ENCODE measurements at regions of chr5 and their contacts with region 1.

Region 1: GRCh38 chr5:123423278-123424149 is at the start of gene CEP120:
- DNase-seq: peak; percentile 100
- H3K4me3 Mint-ChIP-seq: no peak within 1 kb of the TSS
- H3K27ac Mint-ChIP-seq: no peak within 1 kb of the TSS
- H3K4me1 Mint-ChIP-seq: peaks cover 15% of the 10 kb centered on the region
- H3K27me3 Mint-ChIP-seq: no peaks in the 10 kb centered on the region
- CTCF ChIP-seq: peak; percentile 87
- total RNA-seq, gene CEP120: 49.8 and 54.5 TPM in 2 replicates

Region 2: GRCh38 chr5:122602700-122603099 is 820.8 kb before region 1 on chr5:
- CTCF ChIA-PET with region 1: no interaction called
- POLR2A ChIA-PET with region 1: no interaction called
- intact Hi-C with region 1: no loop called
- DNase-seq: no peak
- H3K4me3 Mint-ChIP-seq: no peak overlapping the region
- H3K27ac Mint-ChIP-seq: no peak overlapping the region
- H3K4me1 Mint-ChIP-seq: peaks cover 6% of the 10 kb centered on the region
- H3K27me3 Mint-ChIP-seq: no peaks in the 10 kb centered on the region
- CTCF ChIP-seq: no peak

Region 3: GRCh38 chr5:122766130-122766529 is 657.4 kb before region 1 on chr5:
- CTCF ChIA-PET with region 1: no interaction called
- POLR2A ChIA-PET with region 1: no interaction called
- intact Hi-C with region 1: no loop called
- DNase-seq: no peak
- H3K4me3 Mint-ChIP-seq: no peak overlapping the region
- H3K27ac Mint-ChIP-seq: no peak overlapping the region
- H3K4me1 Mint-ChIP-seq: no peaks in the 10 kb centered on the region
- H3K27me3 Mint-ChIP-seq: no peaks in the 10 kb centered on the region
- CTCF ChIP-seq: no peak

Region 4: DNA sequence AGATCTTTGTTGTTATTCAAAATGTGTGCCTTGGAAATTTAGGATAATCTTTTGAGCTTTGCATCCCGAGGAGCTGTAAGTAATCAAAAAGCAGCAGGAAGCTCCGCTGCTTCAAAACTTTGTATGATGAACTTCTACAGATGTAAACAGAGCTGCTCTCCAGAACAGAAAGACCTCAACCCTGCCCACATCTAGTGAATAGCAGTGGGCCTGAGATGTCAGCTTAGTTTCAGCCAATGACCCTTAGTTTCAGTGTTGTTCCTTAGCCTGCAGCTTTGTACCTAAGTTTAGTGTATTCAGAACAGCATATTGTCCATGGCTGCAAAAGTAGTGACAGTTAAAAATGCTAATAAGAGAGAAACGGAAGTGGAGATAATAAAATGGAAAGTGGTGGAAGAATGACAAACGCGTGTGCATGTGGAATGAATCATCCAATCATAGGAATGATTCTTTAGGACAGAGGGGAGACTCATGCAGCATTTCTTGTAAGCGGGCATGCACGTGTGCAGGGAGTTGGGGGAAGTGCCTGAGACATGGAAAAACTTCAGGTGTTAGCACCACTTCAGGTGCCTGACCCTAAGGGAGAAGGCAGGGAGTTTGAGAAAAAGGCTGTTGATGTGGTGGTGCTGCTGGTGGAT is 553.2 kb before region 1 on chr5:
- CTCF ChIA-PET with region 1: no interaction called
- POLR2A ChIA-PET with region 1: no interaction called
- intact Hi-C with region 1: no loop called
- DNase-seq: no peak
- H3K4me3 Mint-ChIP-seq: no peak overlapping the region
- H3K27ac Mint-ChIP-seq: no peak overlapping the region
- H3K4me1 Mint-ChIP-seq: peaks cover 13% of the 10 kb centered on the region
- H3K27me3 Mint-ChIP-seq: no peaks in the 10 kb centered on the region
- CTCF ChIP-seq: no peak

Region 5: GRCh38 chr5:123441408-123441807 is 17.9 kb after region 1 on chr5:
- CTCF ChIA-PET with region 1: interaction called, 9 read pairs
- POLR2A ChIA-PET with region 1: interaction called, 11 read pairs
- intact Hi-C with region 1: no loop called
- DNase-seq: no peak
- H3K4me3 Mint-ChIP-seq: no peak overlapping the region
- H3K27ac Mint-ChIP-seq: no peak overlapping the region
- H3K4me1 Mint-ChIP-seq: peaks cover 12% of the 10 kb centered on the region
- H3K27me3 Mint-ChIP-seq: no peaks in the 10 kb centered on the region
- CTCF ChIP-seq: no peak

Region 6: GRCh38 chr5:123496892-123497291 is 73.4 kb after region 1 on chr5:
- CTCF ChIA-PET with region 1: interaction called, 10 read pairs
- POLR2A ChIA-PET with region 1: interaction called, 43 read pairs
- intact Hi-C with region 1: loop called (anchors 1 kb)
- DNase-seq: peak; percentile 70
- H3K4me3 Mint-ChIP-seq: peak overlapping the region; percentile 32
- H3K27ac Mint-ChIP-seq: peak overlapping the region; percentile 74
- H3K4me1 Mint-ChIP-seq: peaks cover 23% of the 10 kb centered on the region
- H3K27me3 Mint-ChIP-seq: no peaks in the 10 kb centered on the region
- CTCF ChIP-seq: no peak

Region 7: DNA sequence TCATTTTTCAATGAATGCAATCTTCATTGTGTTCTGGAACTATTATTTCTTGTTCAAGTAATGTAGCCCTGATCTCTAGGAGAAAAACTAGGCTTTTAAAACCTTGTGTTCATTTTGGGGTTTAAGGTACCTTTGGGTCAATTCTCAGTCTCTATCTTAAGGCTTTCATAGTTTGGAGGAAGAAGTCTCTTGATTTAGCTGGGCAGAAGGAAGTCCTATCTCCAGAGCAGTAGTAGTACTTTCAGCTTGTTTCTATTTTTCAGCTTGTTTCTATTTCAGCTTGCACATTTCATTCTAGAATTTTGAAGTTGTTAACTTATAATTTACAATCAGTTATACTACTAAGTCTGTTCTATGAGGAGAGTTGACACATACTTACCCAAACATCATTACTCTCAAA is 103.7 kb after region 1 on chr5:
- CTCF ChIA-PET with region 1: interaction called, 11 read pairs
- POLR2A ChIA-PET with region 1: interaction called, 418 read pairs
- intact Hi-C with region 1: no loop called
- DNase-seq: no peak
- H3K4me3 Mint-ChIP-seq: no peak overlapping the region
- H3K27ac Mint-ChIP-seq: no peak overlapping the region
- H3K4me1 Mint-ChIP-seq: peaks cover 29% of the 10 kb centered on the region
- H3K27me3 Mint-ChIP-seq: no peaks in the 10 kb centered on the region
- CTCF ChIP-seq: no peak

Region 8: DNA sequence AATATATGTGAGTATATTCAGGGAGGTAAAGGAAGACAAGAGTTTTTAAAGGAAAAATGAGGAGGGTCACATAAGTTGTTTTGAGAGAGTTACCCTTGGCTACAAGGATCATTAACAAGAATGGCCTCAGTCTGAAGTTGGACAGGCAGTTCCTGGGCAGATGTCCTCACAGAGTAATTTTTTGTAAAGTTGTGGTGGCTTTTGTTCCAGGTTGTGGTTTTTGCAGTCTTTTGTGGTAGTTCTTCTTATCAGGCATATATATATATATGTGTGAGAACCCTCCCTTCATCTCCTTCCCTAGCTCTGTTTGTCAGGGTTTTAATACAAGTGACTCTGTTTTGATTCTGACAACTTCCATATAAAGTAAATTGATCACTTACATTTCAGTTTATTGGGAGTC is 148.4 kb after region 1 on chr5:
- CTCF ChIA-PET with region 1: interaction called, 3 read pairs
- POLR2A ChIA-PET with region 1: interaction called, 10 read pairs
- intact Hi-C with region 1: no loop called
- DNase-seq: no peak
- H3K4me3 Mint-ChIP-seq: no peak overlapping the region
- H3K27ac Mint-ChIP-seq: no peak overlapping the region
- H3K4me1 Mint-ChIP-seq: peaks cover 6% of the 10 kb centered on the region
- H3K27me3 Mint-ChIP-seq: no peaks in the 10 kb centered on the region
- CTCF ChIP-seq: no peak

Region 9: DNA sequence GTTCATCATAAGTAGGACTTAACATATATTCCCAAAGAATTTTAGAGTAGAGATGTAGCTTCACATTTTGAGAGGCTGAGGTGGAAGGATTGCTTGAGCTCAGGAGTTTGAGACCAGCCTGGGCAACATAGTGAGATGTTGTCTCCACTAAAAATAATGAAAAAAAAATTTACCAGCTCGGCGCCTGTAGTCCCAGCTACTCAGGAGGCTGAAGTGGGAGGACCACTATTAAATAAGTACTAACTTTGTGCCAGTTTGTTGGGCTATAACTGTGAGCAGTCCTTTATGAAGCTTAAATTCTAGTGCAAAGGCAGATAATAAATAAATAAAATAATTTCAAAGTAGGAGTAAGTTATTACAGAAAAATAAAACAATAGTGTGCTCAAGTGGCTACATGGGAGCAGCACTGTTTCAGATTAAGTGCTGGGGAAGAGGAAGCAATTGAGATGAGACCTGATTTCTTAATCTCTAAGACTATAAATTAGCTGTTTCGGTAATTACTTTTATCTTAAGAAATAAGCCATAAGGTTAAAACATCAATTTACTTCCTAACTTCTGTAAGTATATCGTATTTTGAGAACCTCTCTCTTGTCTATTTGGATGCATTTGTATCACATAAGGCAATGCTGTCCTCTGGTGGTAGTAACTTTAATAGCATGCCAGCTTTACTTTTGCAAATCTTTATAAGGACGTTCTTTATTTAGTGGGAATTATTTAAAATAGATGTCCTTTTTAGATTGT is 187.3 kb after region 1 on chr5:
- CTCF ChIA-PET with region 1: interaction called, 50 read pairs
- POLR2A ChIA-PET with region 1: interaction called, 46 read pairs
- intact Hi-C with region 1: loop called (anchors 1 kb)
- DNase-seq: peak; percentile 76
- H3K4me3 Mint-ChIP-seq: no peak overlapping the region
- H3K27ac Mint-ChIP-seq: no peak overlapping the region
- H3K4me1 Mint-ChIP-seq: no peaks in the 10 kb centered on the region
- H3K27me3 Mint-ChIP-seq: no peaks in the 10 kb centered on the region
- CTCF ChIP-seq: peak; percentile 96